H1 (cell line): ENCODE measurements at regions of chr17 and their contacts with region 1.

Region 1: DNA sequence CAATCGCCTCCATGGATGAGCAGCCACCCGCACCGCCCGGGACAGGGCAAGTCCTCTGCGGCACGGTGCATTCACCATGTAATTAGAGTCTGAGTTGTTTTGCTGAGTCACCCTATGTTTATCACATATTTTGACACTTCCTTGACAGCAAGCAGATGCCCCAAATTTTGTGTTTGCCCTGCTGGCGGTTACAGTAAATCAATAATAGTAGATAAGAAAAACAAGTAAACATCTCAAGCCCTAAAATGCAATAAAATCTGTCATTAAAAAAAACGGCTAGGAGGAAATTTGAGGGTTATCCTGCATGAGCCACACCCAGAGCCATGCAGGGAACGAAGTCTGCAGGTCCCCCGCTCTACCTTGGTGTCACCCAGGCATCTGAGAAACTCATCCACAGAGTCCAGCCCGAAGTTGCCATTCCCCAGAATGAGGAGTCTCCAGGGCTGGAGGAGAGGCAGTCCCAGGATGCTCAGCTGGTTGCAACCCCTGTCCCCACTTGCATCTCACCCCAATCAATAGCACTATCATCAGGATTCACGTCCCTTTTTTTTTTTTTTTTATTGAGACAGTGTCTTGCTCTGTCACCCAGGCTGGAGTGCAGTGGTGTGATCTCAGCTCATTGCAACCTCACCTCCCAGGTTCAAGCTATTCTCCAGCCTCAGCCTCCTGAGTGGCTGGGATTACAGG is 16.5 kb upstream of the ST6GALNAC1 start:
- DNase-seq: no peak
- H3K4me3 ChIP-seq: no peak overlapping the region
- H3K27ac ChIP-seq: no peak overlapping the region
- H3K4me1 ChIP-seq: no peaks in the 10 kb centered on the region
- H3K27me3 ChIP-seq: no peaks in the 10 kb centered on the region
- CTCF ChIP-seq: no peak
- EP300 ChIP-seq: no peak
- POLR2A ChIP-seq: no peak
- RAD21 ChIP-seq: no peak

Region 2: DNA sequence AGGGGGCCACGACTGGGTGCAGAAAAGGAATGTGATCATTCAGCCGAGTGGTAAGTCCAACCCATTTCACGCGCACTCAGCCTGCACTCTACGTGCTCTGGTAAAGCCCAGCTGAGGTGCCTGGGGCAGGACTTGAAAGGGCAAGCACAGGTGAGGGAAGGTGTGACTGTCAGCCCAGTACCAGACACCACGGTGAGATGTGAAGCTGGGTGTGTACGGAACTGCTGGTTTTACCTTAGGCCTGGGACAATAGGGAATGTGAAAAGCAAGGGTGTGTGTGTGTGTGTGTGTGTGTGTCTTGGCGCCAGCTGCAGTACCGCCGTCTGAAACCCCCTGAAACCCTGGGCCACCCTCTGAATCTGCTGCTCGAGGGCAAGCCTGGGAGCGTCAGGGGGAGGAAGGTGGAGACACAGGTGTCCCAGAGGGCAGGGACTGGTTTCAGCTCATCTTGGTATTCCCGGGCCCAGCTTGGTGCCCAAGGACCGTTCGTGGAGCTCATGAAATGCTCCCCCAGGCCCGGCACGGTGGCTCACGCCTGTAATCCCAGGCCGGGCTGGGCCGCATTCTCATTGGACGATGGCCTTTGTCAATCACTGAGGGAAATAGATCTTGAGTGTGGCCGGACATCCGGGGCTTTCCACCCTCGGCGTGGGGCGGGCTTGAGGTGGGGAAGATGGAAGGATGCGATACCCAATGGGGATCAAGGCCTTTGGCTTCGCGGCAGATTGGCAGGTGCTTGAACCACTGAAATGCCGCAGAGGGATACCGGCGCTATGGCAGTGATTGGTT is 11.2 kb after region 1 on chr17:
- CTCF ChIA-PET with region 1: interaction called, 3 read pairs
- POLR2A ChIA-PET with region 1: interaction called, 13 read pairs
- DNase-seq: peak; percentile 99
- H3K4me3 ChIP-seq: peak overlapping the region; percentile 73 to 86 (median 80)
- H3K27ac ChIP-seq: peak overlapping the region; percentile 74; the same call in 1 of the 2 replicates
- H3K4me1 ChIP-seq: peaks cover 3 to 10% (median 8%) of the 10 kb centered on the region in 4 experiments
- H3K27me3 ChIP-seq: no peaks in the 10 kb centered on the region
- CTCF ChIP-seq: no peak
- EP300 ChIP-seq: no peak
- POLR2A ChIP-seq: peak in 1 of 2 experiments; percentile 64; a peak in 2 of 3 replicates
- RAD21 ChIP-seq: no peak